ENCODE measurements at regions of chr21 and their contacts with region 1.

Region 1: DNA sequence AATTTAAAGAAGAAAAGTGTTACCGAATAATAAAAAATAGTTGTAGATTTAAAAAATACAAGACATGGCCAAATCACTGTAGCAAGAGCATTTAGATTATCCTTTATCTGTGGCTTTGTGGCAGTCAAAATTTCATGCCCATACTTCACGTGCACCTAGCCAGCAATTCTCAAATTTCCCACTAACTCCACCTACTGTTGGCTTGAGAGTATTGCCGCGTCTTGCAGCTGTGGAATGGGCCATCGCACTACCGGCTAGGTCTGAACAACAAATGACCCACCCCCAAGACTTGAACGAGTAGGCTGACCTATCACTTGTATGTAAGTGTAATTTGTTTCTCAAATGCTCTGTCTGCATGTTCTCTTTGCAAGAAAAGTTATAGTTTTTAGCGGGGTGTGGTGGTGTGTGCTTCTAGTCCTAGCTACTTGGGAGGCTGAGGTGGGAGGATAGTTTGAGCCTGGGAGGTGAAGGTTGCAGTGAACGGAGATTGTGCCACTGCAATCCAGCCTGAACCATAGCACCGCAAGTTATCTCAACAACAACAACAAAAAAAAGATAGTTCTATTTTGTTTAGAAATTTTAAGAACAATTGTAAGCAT is 4.1 kb downstream of the KRTAP13-4 start:
- DNase-seq: peak; percentile 42
- H3K4me3 ChIP-seq: no peak overlapping the region
- H3K27ac ChIP-seq: no peak overlapping the region
- H3K4me1 ChIP-seq: no peaks in the 10 kb centered on the region
- H3K27me3 ChIP-seq: no peaks in the 10 kb centered on the region
- CTCF ChIP-seq: peak; percentile 74 to 79

Region 2: DNA sequence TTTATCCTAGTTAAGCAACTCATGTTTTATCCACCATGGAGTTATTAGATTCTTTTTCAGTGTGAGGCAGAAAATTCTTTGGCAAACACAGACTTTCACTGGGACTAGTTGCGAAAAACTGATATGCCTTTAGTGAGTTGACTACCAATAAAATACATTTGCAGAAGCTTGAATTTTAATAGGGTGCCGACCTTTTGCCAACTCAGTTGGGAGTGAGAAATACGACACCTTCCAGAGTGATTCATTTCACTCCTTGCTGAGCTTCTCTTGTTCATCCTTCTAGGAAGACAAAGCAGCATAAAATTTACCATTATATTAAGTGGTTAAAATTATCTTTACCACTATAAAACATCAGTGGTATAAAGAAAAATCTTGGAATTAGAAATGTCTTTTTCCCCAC is 84.6 kb before region 1 on chr21:
- CTCF ChIA-PET with region 1: no interaction called
- dilution Hi-C with region 1: no loop called
- in situ Hi-C with region 1: no loop called
- intact Hi-C with region 1: no loop called
- DNase-seq: peak; percentile 20
- H3K4me3 ChIP-seq: no peak overlapping the region
- H3K27ac ChIP-seq: no peak overlapping the region
- H3K4me1 ChIP-seq: no peaks in the 10 kb centered on the region
- H3K27me3 ChIP-seq: no peaks in the 10 kb centered on the region
- CTCF ChIP-seq: no peak

Region 3: DNA sequence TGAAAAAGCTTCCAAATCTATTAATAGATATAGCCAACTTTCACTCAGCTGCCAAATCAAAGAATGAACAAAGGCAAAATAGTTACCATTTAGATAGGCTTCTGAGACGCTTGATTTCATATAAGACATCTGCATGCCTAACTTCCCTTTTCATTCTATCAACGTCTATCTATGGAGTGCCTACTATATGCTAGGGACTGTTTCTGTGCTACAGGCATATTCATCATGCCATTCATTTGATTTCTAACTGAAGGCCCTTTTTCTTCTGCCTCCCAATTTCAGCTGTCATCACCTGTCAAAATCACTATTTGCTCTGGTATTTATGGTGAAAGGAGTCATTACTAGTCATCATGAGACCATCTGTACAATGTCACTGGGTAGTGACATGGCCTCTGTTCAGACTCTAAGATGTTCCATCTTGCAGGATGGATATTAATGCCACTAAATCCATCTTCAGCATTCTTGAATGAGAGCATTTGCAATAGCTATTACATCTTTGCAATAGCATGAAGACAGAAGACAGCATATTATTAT is 42.6 kb before region 1 on chr21:
- CTCF ChIA-PET with region 1: no interaction called
- dilution Hi-C with region 1: loop called (anchors 5 kb)
- in situ Hi-C with region 1: no loop called
- intact Hi-C with region 1: no loop called
- DNase-seq: no peak
- H3K4me3 ChIP-seq: no peak overlapping the region
- H3K27ac ChIP-seq: no peak overlapping the region
- H3K4me1 ChIP-seq: no peaks in the 10 kb centered on the region
- H3K27me3 ChIP-seq: peaks cover 3% of the 10 kb centered on the region
- CTCF ChIP-seq: no peak